ENCODE measurements at regions of chr3 and their contacts with region 1.

Region 1: DNA sequence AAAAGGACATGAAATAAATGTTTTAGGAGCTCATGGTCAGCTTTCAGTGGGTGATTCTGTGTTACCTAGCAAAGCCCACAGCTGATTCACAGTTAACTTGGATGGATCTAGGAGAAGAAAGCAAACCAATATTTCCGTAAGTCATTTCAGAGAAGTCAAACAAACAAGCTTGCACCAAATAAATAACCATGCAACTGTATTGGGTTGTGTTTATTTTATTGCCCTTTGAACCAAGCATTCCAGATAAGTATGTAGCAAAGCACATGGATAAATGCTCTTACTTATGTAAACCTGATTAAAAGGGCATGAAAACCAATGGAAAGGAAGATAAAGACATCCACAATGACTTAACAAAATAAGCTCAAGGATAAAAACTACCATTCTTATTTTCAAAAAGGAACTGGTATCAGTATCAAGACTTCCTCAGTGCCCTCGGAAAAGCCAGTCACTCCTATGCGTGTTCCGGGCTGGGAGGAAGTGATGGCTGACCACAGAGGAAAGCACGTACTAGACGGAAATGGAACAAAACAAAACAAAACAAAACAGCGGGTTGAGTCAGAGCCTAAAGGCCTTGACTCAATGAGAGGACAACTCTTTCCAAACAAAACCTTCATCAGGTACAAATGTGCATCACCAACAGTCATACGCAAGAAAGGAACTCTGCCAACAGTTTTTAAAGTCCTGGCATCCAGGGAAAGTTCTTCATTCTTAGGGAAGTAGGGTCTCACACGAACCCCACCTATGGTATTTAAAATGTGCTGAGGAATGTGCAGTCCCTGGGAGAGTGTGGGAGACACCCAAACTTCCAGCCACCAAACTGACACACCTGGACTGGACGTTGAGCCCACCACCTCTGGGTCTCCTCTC is 103.3 kb downstream of the SNRK start:
- DNase-seq: peak; percentile 84 to 92 (median 87)
- H3K4me3 ChIP-seq: peak overlapping the region in 1 of 2 donors; percentile 48
- H3K4me3 Mint-ChIP-seq: peak overlapping the region; percentile 60 to 81 (median 68)
- H3K27ac ChIP-seq: peak overlapping the region; percentile 64
- H3K27ac Mint-ChIP-seq: peak overlapping the region; percentile 85 to 98 (median 96)
- H3K4me1 ChIP-seq: peaks cover 61% of the 10 kb centered on the region
- H3K4me1 Mint-ChIP-seq: peaks cover 66 to 97% (median 79%) of the 10 kb centered on the region in 4 donors
- H3K27me3 ChIP-seq: no peaks in the 10 kb centered on the region
- H3K27me3 Mint-ChIP-seq: no peaks in the 10 kb centered on the region

Region 2: GRCh38 chr3:43296565-43296964 is 93.1 kb before region 1 on chr3:
- CTCF ChIA-PET with region 1: no interaction called
- POLR2A ChIA-PET with region 1: interaction called, 10 read pairs
- intact Hi-C with region 1: no loop called
- DNase-seq: peak; percentile 76 to 86 (median 83)
- H3K4me3 ChIP-seq: peak overlapping the region in 1 of 2 donors; percentile 16
- H3K4me3 Mint-ChIP-seq: peak overlapping the region; percentile 67 to 86 (median 79)
- H3K27ac ChIP-seq: peak overlapping the region; percentile 59
- H3K27ac Mint-ChIP-seq: peak overlapping the region; percentile 87 to 97 (median 94)
- H3K4me1 ChIP-seq: peaks cover 97% of the 10 kb centered on the region
- H3K4me1 Mint-ChIP-seq: peaks cover 59 to 88% (median 72%) of the 10 kb centered on the region in 4 donors
- H3K27me3 ChIP-seq: no peaks in the 10 kb centered on the region
- H3K27me3 Mint-ChIP-seq: no peaks in the 10 kb centered on the region

Region 3: DNA sequence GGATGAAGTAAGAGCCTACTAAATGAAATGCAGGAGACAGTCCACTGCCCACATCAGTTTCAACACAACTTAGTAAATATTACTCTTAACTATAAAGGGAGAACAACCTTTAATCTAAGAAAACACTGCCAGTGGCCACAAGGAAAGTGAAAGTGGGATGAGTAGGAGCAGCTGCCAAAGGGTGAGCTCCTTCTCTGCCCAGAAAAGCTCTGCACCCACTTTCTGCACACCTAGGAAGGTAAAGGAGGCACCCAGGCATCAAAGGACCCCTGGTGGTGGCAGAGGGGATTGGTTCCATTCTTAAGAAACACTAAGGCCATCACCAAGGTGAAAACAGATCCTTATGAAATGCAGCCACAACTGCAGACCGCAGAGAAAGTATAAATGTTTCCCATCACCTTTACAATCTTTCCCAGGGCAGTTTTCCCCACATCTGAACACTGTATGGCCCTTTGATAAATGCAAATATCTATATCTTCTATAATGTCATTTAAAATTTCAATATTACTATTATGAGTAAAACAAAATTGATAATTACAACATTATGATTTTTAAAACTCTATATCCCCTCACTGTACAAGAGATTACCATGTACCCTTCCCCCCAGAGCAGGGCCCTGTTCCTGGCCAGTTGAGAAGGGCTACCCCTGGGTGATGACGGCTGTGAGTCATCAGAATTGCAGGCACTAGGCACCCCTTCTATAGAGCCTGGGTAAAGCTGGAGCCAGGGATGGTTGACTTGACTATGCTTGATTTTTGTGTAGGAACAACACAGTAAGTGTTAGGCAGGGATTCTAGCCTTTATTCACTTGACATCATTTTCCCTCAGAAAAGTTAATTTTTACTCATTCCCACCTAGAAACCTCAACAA is 11.3 kb before region 1 on chr3:
- CTCF ChIA-PET with region 1: interaction called, 41 read pairs
- POLR2A ChIA-PET with region 1: interaction called, 10 read pairs
- intact Hi-C with region 1: no loop called
- DNase-seq: peak; percentile 71 to 76 (median 73)
- H3K4me3 ChIP-seq: no peak overlapping the region
- H3K4me3 Mint-ChIP-seq: peak overlapping the region in 2 of 8 donors; percentile 11 to 14
- H3K27ac ChIP-seq: no peak overlapping the region
- H3K27ac Mint-ChIP-seq: peak overlapping the region in 6 of 7 donors; percentile 38 to 84 (median 69)
- H3K4me1 ChIP-seq: peaks cover 9% of the 10 kb centered on the region
- H3K4me1 Mint-ChIP-seq: peaks cover 9 to 26% (median 17%) of the 10 kb centered on the region in 4 donors
- H3K27me3 ChIP-seq: no peaks in the 10 kb centered on the region
- H3K27me3 Mint-ChIP-seq: no peaks in the 10 kb centered on the region

Region 4: DNA sequence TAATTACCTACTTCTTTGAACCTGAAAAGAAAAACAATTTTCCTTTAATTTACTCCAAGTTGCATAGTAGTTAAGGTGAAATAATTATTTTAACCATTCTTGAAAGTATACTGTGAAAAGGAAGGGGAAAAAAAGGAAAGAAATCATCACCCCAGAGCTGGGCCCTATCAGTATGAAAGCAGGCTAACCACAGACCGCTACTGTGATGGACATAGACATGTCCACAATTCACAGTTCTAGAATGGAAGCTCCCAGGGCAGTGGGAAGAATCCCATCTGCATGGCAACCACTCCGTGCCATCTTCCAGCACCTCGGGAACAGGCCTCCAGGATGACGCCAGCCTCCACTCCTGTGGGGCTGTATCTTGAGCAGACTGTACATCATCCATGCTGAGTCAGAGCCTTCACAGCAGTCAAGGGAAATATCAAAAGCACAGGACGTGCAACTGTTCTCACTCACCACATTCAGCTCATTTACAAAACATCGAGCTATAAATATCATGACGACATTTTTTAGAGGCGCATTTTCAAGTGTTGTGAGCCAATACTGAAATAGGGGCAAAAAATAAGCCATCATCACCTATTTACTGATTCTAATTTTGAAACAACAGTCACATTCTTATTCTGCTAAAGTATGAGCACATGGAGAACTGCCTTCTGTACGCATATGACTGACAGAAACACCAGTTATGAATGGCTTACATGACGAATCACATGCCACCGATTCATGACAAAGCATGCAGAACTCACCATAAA is 16.4 kb after region 1 on chr3:
- CTCF ChIA-PET with region 1: interaction called, 7 read pairs
- POLR2A ChIA-PET with region 1: interaction called, 14 read pairs
- intact Hi-C with region 1: no loop called
- DNase-seq: no peak
- H3K4me3 ChIP-seq: no peak overlapping the region
- H3K4me3 Mint-ChIP-seq: no peak overlapping the region
- H3K27ac ChIP-seq: no peak overlapping the region
- H3K27ac Mint-ChIP-seq: no peak overlapping the region
- H3K4me1 ChIP-seq: no peaks in the 10 kb centered on the region
- H3K4me1 Mint-ChIP-seq: peaks cover 0 to 4% (median 0%) of the 10 kb centered on the region in 4 donors
- H3K27me3 ChIP-seq: no peaks in the 10 kb centered on the region
- H3K27me3 Mint-ChIP-seq: peaks cover 0 to 4% of the 10 kb centered on the region in 2 donors

Region 5: DNA sequence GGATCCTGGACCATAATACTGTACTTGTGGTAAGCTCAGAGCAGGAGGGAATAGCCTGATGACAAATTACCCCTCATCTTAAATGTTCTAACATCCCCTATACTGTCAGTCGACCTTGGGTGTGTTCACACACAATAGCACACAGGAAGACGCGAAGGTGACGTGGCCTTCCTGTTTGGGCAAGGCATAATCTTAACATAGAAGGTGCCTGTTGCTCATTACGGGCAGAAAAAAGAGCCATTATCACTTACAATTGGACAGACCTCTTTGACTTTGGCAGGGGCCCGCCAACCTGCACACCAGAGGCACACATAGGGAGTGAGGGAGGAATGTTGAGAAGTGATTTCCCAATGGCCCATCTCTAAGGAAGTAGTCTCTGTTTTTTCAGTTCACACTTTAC is 88.0 kb after region 1 on chr3:
- CTCF ChIA-PET with region 1: interaction called, 5 read pairs
- POLR2A ChIA-PET with region 1: interaction called, 26 read pairs
- intact Hi-C with region 1: loop called (anchors 2 kb)
- DNase-seq: peak; percentile 77 to 88 (median 82)
- H3K4me3 ChIP-seq: peak overlapping the region in 1 of 2 donors; percentile 27
- H3K4me3 Mint-ChIP-seq: peak overlapping the region; percentile 17 to 78 (median 66)
- H3K27ac ChIP-seq: peak overlapping the region; percentile 74
- H3K27ac Mint-ChIP-seq: peak overlapping the region; percentile 83 to 99 (median 99)
- H3K4me1 ChIP-seq: peaks cover 39% of the 10 kb centered on the region
- H3K4me1 Mint-ChIP-seq: peaks cover 37 to 61% (median 49%) of the 10 kb centered on the region in 4 donors
- H3K27me3 ChIP-seq: no peaks in the 10 kb centered on the region
- H3K27me3 Mint-ChIP-seq: no peaks in the 10 kb centered on the region

Region 6: DNA sequence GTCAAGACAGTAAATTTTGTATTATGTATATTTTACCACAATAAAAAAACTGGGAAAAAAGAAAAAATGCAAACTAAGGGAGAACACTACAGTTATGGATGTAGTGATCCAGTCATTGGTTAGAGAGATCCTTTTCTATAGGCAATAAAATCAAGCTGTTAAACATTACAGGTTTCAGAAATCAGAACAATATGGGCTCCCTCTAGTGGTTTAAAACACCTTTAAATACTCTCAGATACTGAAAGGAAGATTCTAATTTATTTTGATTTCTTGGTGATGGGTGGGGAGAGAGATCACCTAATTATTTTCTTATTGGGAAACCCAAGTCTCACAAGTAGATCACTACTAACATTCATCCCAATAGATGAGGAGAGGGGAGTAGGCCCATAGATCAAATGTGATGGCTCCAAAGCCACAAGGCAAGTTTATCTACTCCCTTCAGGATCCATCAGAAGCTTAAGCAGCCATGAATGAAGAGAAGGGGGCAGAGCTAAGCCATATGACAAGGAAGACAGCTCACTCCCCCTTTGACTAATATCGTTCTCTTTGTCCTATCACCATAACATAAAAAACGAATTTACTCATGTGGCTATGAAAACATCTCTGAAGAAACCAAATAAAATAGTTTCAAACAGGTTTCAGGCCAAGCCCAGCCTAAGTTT is 113.6 kb after region 1 on chr3:
- CTCF ChIA-PET with region 1: interaction called, 58 read pairs
- POLR2A ChIA-PET with region 1: interaction called, 28 read pairs
- intact Hi-C with region 1: no loop called
- DNase-seq: peak in 4 of 5 donors; percentile 54 to 61 (median 60)
- H3K4me3 ChIP-seq: no peak overlapping the region
- H3K4me3 Mint-ChIP-seq: no peak overlapping the region
- H3K27ac ChIP-seq: no peak overlapping the region
- H3K27ac Mint-ChIP-seq: peak overlapping the region in 5 of 7 donors; percentile 24 to 88 (median 63)
- H3K4me1 ChIP-seq: peaks cover 39% of the 10 kb centered on the region
- H3K4me1 Mint-ChIP-seq: peaks cover 32 to 52% (median 41%) of the 10 kb centered on the region in 4 donors
- H3K27me3 ChIP-seq: no peaks in the 10 kb centered on the region
- H3K27me3 Mint-ChIP-seq: no peaks in the 10 kb centered on the region